ENCODE measurements at regions of chr15 and their contacts with region 1.

Region 1: GRCh38 chr15:64634576-64635498 is 140.6 kb downstream of the RBPMS2 start:
- DNase-seq: peak; percentile 91
- ATAC-seq: peak; percentile 81
- H3K4me3 ChIP-seq: peak overlapping the region; percentile 41; the same call in 1 of the 2 replicates
- H3K27ac ChIP-seq: peak overlapping the region; percentile 97
- H3K4me1 ChIP-seq: peaks cover 45% of the 10 kb centered on the region
- H3K27me3 ChIP-seq: no peaks in the 10 kb centered on the region
- CTCF ChIP-seq: no peak
- EP300 ChIP-seq: peak; percentile 92 to 96
- POLR2A ChIP-seq: no peak
- RAD21 ChIP-seq: no peak

Region 2: DNA sequence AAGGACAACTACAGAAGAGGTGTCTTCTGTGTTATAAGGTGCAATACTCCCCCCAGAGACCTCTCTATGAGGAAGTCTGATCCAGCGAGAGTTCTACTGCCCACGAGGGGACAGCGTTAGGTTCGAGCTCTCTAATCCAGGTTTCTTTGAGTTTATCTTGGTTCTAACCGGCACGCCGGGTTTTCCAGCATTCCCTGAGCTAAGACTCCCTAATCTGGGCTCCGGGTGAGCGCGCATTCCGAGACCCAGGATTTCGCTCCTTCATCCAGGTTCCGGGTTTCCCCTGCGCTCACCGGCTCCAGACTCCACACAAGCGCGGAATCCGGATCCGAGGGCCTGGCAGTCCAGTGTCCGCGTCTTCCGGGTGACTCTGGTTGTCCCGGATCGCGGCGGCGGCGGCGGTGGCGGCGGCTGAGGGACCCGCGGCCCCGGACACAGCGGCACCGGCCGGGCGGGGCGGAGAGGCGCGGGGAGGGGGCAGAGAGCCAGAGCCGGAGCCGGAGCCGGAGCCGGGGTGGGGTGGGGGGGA is 174.6 kb before region 1 on chr15 and contains the start of gene ZNF609:
- CTCF ChIA-PET with region 1: interaction called, 4 read pairs
- POLR2A ChIA-PET with region 1: interaction called, 11 read pairs
- RAD21 ChIA-PET with region 1: interaction called, 19 read pairs
- SMC1A ChIA-PET with region 1: interaction called, 12 read pairs
- in situ Hi-C with region 1: no loop called
- intact Hi-C with region 1: no loop called
- DNase-seq: no peak
- ATAC-seq: peak; percentile 63
- H3K4me3 ChIP-seq: peak within 1 kb of the TSS; percentile 78
- H3K27ac ChIP-seq: peak within 1 kb of the TSS; percentile 92
- H3K4me1 ChIP-seq: peaks cover 50% of the 10 kb centered on the region
- H3K27me3 ChIP-seq: no peaks in the 10 kb centered on the region
- CTCF ChIP-seq: 0 out of 6 replicates have a peak, but pooled peaks of 1 of the 3 experiments have one; percentile 4
- EP300 ChIP-seq: no peak
- POLR2A ChIP-seq: peak; percentile 72
- RAD21 ChIP-seq: peak; percentile 27; the same call in 1 of the 2 replicates
- polyA plus RNA-seq, gene ZNF609: 5.1 to 7.4 TPM

Region 3: GRCh38 chr15:64536244-64536836 is 98.5 kb before region 1 on chr15:
- CTCF ChIA-PET with region 1: no interaction called
- POLR2A ChIA-PET with region 1: no interaction called
- RAD21 ChIA-PET with region 1: interaction called, 8 read pairs
- SMC1A ChIA-PET with region 1: interaction called, 14 read pairs
- in situ Hi-C with region 1: no loop called
- intact Hi-C with region 1: no loop called
- DNase-seq: no peak
- ATAC-seq: peak; percentile 37
- H3K4me3 ChIP-seq: no peak overlapping the region
- H3K27ac ChIP-seq: peak overlapping the region; percentile 22; the same call in 1 of the 2 replicates
- H3K4me1 ChIP-seq: peaks cover 19% of the 10 kb centered on the region
- H3K27me3 ChIP-seq: no peaks in the 10 kb centered on the region
- CTCF ChIP-seq: no peak
- EP300 ChIP-seq: no peak
- POLR2A ChIP-seq: no peak
- RAD21 ChIP-seq: no peak

Region 4: GRCh38 chr15:64596701-64597476 is 37.9 kb before region 1 on chr15:
- CTCF ChIA-PET with region 1: interaction called, 3 read pairs
- POLR2A ChIA-PET with region 1: interaction called, 6 read pairs
- RAD21 ChIA-PET with region 1: interaction called, 18 read pairs
- SMC1A ChIA-PET with region 1: interaction called, 22 read pairs
- in situ Hi-C with region 1: no loop called
- intact Hi-C with region 1: no loop called
- DNase-seq: no peak
- ATAC-seq: peak; percentile 79
- H3K4me3 ChIP-seq: peak overlapping the region; percentile 53
- H3K27ac ChIP-seq: peak overlapping the region; percentile 74
- H3K4me1 ChIP-seq: peaks cover 10% of the 10 kb centered on the region
- H3K27me3 ChIP-seq: no peaks in the 10 kb centered on the region
- CTCF ChIP-seq: no peak
- EP300 ChIP-seq: no peak
- POLR2A ChIP-seq: no peak
- RAD21 ChIP-seq: no peak

Region 5: DNA sequence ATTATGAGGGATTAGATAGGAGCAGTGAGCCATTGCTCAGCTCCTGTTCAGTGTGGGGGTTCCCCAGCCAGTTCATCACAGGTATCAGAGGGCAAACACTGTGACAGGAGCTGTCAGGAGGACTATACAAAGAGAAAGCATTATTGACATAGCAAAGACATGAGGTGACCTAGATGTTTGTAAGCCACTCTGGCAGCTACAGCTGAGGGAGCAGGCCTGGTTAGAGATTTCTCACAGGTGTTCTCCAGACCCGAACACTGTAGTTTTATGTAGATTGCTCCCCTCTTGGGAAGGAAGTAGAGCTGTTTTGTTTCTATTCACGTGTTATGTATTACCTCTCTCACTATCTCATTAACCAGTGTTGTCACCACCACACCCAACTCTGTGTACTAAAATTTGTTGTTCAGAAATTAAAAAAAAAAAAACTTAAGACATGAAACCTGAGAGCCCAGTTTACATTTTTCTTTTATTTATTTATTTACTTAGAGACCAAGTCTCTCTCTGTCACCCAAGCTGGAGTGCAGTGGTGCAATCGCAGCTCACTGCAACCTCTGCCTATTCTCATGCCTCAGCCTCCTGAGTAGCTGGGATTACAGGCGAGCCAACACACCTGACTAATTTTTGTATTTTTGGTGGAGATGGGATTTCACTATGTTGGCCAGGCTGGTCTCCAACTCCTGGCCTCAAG is 16.9 kb after region 1 on chr15:
- CTCF ChIA-PET with region 1: interaction called, 93 read pairs
- POLR2A ChIA-PET with region 1: interaction called, 63 read pairs
- RAD21 ChIA-PET with region 1: interaction called, 239 read pairs
- SMC1A ChIA-PET with region 1: interaction called, 234 read pairs
- in situ Hi-C with region 1: no loop called
- intact Hi-C with region 1: loop called (anchors 1 kb)
- DNase-seq: peak; percentile 82
- ATAC-seq: peak; percentile 96
- H3K4me3 ChIP-seq: peak overlapping the region; percentile 15; the same call in 1 of the 2 replicates
- H3K27ac ChIP-seq: peak overlapping the region; percentile 74
- H3K4me1 ChIP-seq: peaks cover 25% of the 10 kb centered on the region
- H3K27me3 ChIP-seq: no peaks in the 10 kb centered on the region
- CTCF ChIP-seq: no peak
- EP300 ChIP-seq: no peak
- POLR2A ChIP-seq: 0 out of 2 replicates have a peak, but pooled peaks have one; percentile 26
- RAD21 ChIP-seq: 0 out of 2 replicates have a peak, but pooled peaks have one; percentile 20

Region 6: GRCh38 chr15:64693134-64693533 is 58.3 kb after region 1 on chr15:
- CTCF ChIA-PET with region 1: interaction called, 3 read pairs
- POLR2A ChIA-PET with region 1: interaction called, 6 read pairs
- RAD21 ChIA-PET with region 1: interaction called, 6 read pairs
- SMC1A ChIA-PET with region 1: interaction called, 13 read pairs
- in situ Hi-C with region 1: no loop called
- intact Hi-C with region 1: no loop called
- DNase-seq: no peak
- ATAC-seq: no peak
- H3K4me3 ChIP-seq: no peak overlapping the region
- H3K27ac ChIP-seq: no peak overlapping the region
- H3K4me1 ChIP-seq: peaks cover 22% of the 10 kb centered on the region
- H3K27me3 ChIP-seq: no peaks in the 10 kb centered on the region
- CTCF ChIP-seq: no peak
- EP300 ChIP-seq: no peak
- POLR2A ChIP-seq: no peak
- RAD21 ChIP-seq: no peak

Region 7: GRCh38 chr15:65655026-65655425 is 1020.2 kb after region 1 on chr15:
- CTCF ChIA-PET with region 1: no interaction called
- POLR2A ChIA-PET with region 1: no interaction called
- RAD21 ChIA-PET with region 1: no interaction called
- SMC1A ChIA-PET with region 1: no interaction called
- in situ Hi-C with region 1: no loop called
- intact Hi-C with region 1: no loop called
- DNase-seq: no peak
- ATAC-seq: no peak
- H3K4me3 ChIP-seq: no peak overlapping the region
- H3K27ac ChIP-seq: no peak overlapping the region
- H3K4me1 ChIP-seq: peaks cover 9% of the 10 kb centered on the region
- H3K27me3 ChIP-seq: no peaks in the 10 kb centered on the region
- CTCF ChIP-seq: no peak
- EP300 ChIP-seq: no peak
- POLR2A ChIP-seq: no peak
- RAD21 ChIP-seq: no peak

Measured in GM12878 (cell line).